Transverse colon (tissue), 4 donors: ENCODE measurements at regions of chr6 and their contacts with region 1.

Region 1: GRCh38 chr6:140180306-140180705 is 805.9 kb upstream of the CITED2 start:
- DNase-seq: no peak
- H3K4me3 ChIP-seq: no peak overlapping the region
- H3K27ac ChIP-seq: no peak overlapping the region
- H3K4me1 ChIP-seq: no peaks in the 10 kb centered on the region
- H3K27me3 ChIP-seq: no peaks in the 10 kb centered on the region
- CTCF ChIP-seq: no peak
- EP300 ChIP-seq: no peak
- POLR2A ChIP-seq: no peak

Region 2: GRCh38 chr6:140168365-140168764 is 11.9 kb before region 1 on chr6:
- in situ Hi-C with region 1: no loop called
- intact Hi-C with region 1: loop called (anchors 1 kb)
- DNase-seq: no peak
- H3K4me3 ChIP-seq: no peak overlapping the region
- H3K27ac ChIP-seq: no peak overlapping the region
- H3K4me1 ChIP-seq: no peaks in the 10 kb centered on the region
- H3K27me3 ChIP-seq: no peaks in the 10 kb centered on the region
- CTCF ChIP-seq: no peak
- EP300 ChIP-seq: no peak
- POLR2A ChIP-seq: no peak

Region 3: GRCh38 chr6:140504776-140505175 is 324.5 kb after region 1 on chr6:
- in situ Hi-C with region 1: no loop called
- intact Hi-C with region 1: no loop called
- DNase-seq: no peak
- H3K4me3 ChIP-seq: no peak overlapping the region
- H3K27ac ChIP-seq: no peak overlapping the region
- H3K4me1 ChIP-seq: no peaks in the 10 kb centered on the region
- H3K27me3 ChIP-seq: no peaks in the 10 kb centered on the region
- CTCF ChIP-seq: no peak
- EP300 ChIP-seq: no peak
- POLR2A ChIP-seq: no peak